H1 (cell line): ENCODE measurements at regions of chr12 and their contacts with region 1.

Region 1: DNA sequence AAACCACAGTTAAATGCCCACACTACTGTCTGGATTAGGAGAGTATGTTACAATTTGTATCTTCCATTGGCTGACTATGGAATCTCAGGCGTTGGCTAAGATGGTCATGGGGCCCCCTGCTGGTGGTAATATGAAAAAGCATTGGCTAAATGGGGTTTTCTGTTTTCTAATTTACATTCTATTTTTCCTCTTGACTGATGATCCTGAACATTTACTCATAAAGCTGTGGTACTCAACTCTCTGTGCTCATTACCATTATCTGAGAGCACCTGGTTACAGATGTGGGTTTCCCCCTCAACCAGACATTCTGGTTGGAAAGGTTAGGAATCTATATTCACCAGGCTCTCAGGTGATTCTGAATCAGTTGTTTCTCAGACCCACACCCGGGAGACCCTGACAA is 64.8 kb downstream of the WSCD2 start:
- DNase-seq: peak in 1 of 2 experiments; percentile 56
- H3K4me3 ChIP-seq: no peak overlapping the region
- H3K27ac ChIP-seq: no peak overlapping the region
- H3K4me1 ChIP-seq: peaks cover 0 to 5% (median 0%) of the 10 kb centered on the region in 4 experiments; a peak in 4 of 7 replicates
- H3K27me3 ChIP-seq: no peaks in the 10 kb centered on the region
- CTCF ChIP-seq: peak in 2 of 3 experiments; percentile 68 to 77; a peak in 3 of 4 replicates
- EP300 ChIP-seq: no peak
- POLR2A ChIP-seq: no peak
- RAD21 ChIP-seq: peak; percentile 83 to 89

Region 2: GRCh38 chr12:108063192-108063591 is 130.7 kb before region 1 on chr12:
- CTCF ChIA-PET with region 1: interaction called, 47 read pairs
- POLR2A ChIA-PET with region 1: no interaction called
- DNase-seq: no peak
- H3K4me3 ChIP-seq: no peak overlapping the region
- H3K27ac ChIP-seq: no peak overlapping the region
- H3K4me1 ChIP-seq: no peaks in the 10 kb centered on the region
- H3K27me3 ChIP-seq: no peaks in the 10 kb centered on the region; a peak in 1 of 7 replicates
- CTCF ChIP-seq: peak in 2 of 3 experiments; percentile 60 to 69; a peak in 2 of 4 replicates
- EP300 ChIP-seq: no peak
- POLR2A ChIP-seq: no peak
- RAD21 ChIP-seq: peak; percentile 83 to 88

Region 3: DNA sequence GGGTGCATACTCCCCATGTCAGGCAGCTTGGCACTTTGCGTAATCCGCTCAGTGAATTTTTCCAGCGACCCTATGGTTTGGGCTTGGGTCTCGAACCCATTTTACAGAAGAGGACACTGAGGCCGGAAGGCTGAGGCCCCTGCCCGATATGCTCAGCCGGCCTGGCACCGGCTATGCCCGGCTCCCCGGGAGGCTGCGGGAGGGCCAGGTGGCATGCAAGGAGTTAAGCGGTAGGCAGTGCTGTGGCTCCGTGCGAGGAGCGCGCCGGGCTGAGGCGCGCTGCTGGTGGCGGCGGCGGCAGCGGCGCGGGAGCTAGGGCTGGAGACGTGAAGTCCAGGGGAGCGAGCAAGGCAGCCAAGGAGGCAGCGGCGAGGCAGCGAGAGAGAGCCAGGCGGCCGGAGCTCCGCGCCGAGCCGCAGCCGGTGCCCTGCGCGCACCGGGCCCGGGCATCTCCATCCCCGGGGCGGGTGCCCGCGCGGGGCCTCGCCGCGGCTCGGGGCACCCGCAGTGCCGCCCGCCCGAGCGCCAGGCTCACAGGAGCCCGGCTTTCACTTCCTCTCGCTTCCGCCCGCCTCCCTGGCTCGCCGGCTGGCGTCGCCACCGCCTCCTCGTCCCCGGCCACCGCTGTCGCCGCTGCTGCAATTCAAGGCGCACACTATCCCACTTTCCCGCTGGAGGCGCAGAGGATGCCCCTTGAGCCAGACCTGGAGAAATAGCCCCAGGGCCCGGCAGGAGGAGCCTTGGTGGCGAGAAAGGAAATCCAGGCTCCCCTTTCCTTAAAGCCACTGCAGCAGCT is 64.7 kb before region 1 on chr12 and contains the start of gene WSCD2:
- CTCF ChIA-PET with region 1: interaction called, 23 read pairs
- POLR2A ChIA-PET with region 1: no interaction called
- DNase-seq: peak; percentile 67 to 85
- H3K4me3 ChIP-seq: peak within 1 kb of the TSS; percentile 50 to 73 (median 66)
- H3K27ac ChIP-seq: no peak within 1 kb of the TSS
- H3K4me1 ChIP-seq: peaks cover 0 to 19% (median 2%) of the 10 kb centered on the region in 4 experiments; a peak in 4 of 7 replicates
- H3K27me3 ChIP-seq: peaks cover 0 to 14% (median 6%) of the 10 kb centered on the region in 4 experiments; a peak in 3 of 7 replicates
- CTCF ChIP-seq: peak; percentile 69 to 96 (median 69)
- EP300 ChIP-seq: no peak
- POLR2A ChIP-seq: 0 out of 3 replicates have a peak, but pooled peaks of 1 of the 2 experiments have one; percentile 43
- RAD21 ChIP-seq: peak; percentile 59 to 79
- total RNA-seq, gene WSCD2: 1.7 and 2.2 TPM in 2 replicates

Region 4: DNA sequence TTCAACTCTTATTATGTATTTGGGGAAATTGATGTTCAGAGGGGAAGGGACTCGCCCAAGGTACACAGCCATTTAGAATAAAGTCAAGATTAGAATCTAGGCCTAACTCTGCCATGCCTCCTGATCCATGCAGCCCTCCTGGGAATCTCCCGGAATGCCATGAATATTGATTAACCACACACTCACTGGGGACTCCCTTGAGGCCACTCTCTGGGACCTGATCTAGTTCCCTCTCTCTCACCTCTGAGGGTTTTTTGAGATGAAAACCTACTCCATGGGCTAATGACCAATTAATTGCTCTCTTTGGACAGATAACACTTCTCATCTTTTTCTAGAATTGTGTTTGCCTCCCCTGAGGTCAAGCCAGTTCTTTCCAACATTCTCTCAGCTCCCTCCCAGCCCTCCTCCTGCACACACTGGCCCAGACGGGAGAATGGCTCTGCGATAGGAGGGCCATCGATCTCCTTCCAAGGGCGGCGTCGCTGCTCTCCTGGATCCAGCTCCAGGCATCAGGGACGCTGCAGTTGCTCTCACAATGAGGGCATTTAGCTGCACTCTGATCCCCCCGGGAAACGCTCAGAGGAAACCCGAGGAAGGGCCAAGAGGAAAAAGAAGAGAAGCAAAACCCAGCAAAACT is 42.3 kb before region 1 on chr12:
- CTCF ChIA-PET with region 1: no interaction called
- POLR2A ChIA-PET with region 1: no interaction called
- DNase-seq: no peak
- H3K4me3 ChIP-seq: no peak overlapping the region
- H3K27ac ChIP-seq: no peak overlapping the region
- H3K4me1 ChIP-seq: peaks cover 0 to 4% (median under 1%) of the 10 kb centered on the region in 4 experiments; a peak in 2 of 7 replicates
- H3K27me3 ChIP-seq: no peaks in the 10 kb centered on the region
- CTCF ChIP-seq: no peak
- EP300 ChIP-seq: no peak
- POLR2A ChIP-seq: no peak
- RAD21 ChIP-seq: no peak

Region 5: DNA sequence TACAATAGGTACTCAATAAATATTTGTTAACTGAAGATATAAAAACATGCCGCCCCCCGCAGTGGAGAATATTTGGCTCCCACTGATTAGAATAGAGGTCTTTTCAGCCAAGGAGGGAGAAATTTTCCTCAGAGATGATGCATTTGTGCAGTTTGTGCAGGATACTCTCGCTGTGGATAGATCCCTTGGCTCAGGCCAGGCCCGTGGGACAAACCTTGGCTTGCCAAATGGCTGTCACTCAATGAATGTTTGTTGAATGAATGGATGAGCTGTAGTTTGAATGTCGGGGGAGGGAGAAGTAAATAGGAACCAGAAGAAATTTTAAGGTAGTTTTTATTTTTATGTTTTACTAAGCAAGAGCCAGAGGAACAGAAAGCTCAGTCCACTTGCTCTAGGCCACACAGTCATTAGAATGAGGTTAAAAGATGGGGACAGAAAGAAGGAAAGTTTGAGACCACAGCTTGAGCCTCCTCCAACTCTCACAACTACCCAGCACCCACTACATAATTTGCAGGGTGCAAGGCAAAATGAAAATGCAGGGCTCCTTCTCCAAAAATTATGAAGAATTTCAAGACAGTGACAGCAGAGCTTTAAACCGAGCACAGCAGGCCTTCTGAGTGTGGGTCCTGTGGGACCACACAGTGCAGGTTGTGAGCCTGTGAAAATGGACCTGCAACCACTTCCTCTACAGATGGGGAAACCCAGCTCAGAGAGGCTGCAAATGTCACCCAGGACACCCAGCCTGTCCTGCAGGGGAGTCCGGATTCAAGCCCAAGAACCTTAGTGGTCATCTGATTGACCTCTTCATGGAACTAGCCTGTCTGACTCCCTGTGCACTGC is 13.4 kb before region 1 on chr12:
- CTCF ChIA-PET with region 1: interaction called, 18 read pairs
- POLR2A ChIA-PET with region 1: no interaction called
- DNase-seq: no peak
- H3K4me3 ChIP-seq: no peak overlapping the region
- H3K27ac ChIP-seq: no peak overlapping the region; the same call in 1 of the 2 replicates
- H3K4me1 ChIP-seq: peaks cover 0 to 4% (median under 1%) of the 10 kb centered on the region in 4 experiments; a peak in 3 of 7 replicates
- H3K27me3 ChIP-seq: no peaks in the 10 kb centered on the region
- CTCF ChIP-seq: no peak
- EP300 ChIP-seq: no peak
- POLR2A ChIP-seq: no peak
- RAD21 ChIP-seq: no peak

Region 6: GRCh38 chr12:108234158-108234557 is 40.2 kb after region 1 on chr12:
- CTCF ChIA-PET with region 1: interaction called, 11 read pairs
- POLR2A ChIA-PET with region 1: no interaction called
- DNase-seq: no peak
- H3K4me3 ChIP-seq: no peak overlapping the region
- H3K27ac ChIP-seq: no peak overlapping the region
- H3K4me1 ChIP-seq: peaks cover 5 to 27% (median 11%) of the 10 kb centered on the region in 4 experiments; a peak in 6 of 7 replicates
- H3K27me3 ChIP-seq: no peaks in the 10 kb centered on the region
- CTCF ChIP-seq: peak in 2 of 3 experiments; percentile 21 to 24; a peak in 1 of 4 replicates
- EP300 ChIP-seq: no peak
- POLR2A ChIP-seq: no peak
- RAD21 ChIP-seq: peak; percentile 49 to 67

Region 7: DNA sequence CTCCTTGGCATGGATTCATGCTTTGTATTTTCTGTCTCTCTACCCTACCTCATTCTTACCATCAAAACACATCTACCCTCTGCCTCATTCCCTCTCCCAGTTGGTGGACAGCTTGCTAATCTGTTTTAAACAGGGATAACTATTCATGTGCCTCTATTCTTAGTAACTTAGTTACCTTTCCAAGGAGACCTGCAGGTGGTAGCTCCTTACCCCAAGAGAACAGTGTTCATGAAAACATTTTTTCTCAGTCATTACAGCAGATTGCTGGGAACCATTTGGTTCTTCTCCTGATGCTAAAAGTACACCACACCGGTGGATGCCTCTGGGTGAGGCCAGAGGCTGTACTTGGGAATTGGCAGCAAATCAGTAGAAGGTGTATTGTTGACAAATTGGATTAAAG is 72.2 kb after region 1 on chr12:
- CTCF ChIA-PET with region 1: no interaction called
- POLR2A ChIA-PET with region 1: no interaction called
- DNase-seq: no peak
- H3K4me3 ChIP-seq: no peak overlapping the region
- H3K27ac ChIP-seq: no peak overlapping the region
- H3K4me1 ChIP-seq: peaks cover 0 to 3% (median 0%) of the 10 kb centered on the region in 4 experiments; a peak in 1 of 7 replicates
- H3K27me3 ChIP-seq: no peaks in the 10 kb centered on the region
- CTCF ChIP-seq: no peak
- EP300 ChIP-seq: no peak
- POLR2A ChIP-seq: no peak
- RAD21 ChIP-seq: no peak

Region 8: GRCh38 chr12:108305520-108305919 is 111.6 kb after region 1 on chr12:
- CTCF ChIA-PET with region 1: no interaction called
- POLR2A ChIA-PET with region 1: no interaction called
- DNase-seq: no peak
- H3K4me3 ChIP-seq: no peak overlapping the region
- H3K27ac ChIP-seq: no peak overlapping the region
- H3K4me1 ChIP-seq: peaks cover 2 to 26% (median 14%) of the 10 kb centered on the region in 4 experiments
- H3K27me3 ChIP-seq: no peaks in the 10 kb centered on the region
- CTCF ChIP-seq: no peak
- EP300 ChIP-seq: no peak
- POLR2A ChIP-seq: no peak
- RAD21 ChIP-seq: no peak